B cell (primary cell): ENCODE measurements at regions of chr1 and their contacts with region 1.

Region 1: DNA sequence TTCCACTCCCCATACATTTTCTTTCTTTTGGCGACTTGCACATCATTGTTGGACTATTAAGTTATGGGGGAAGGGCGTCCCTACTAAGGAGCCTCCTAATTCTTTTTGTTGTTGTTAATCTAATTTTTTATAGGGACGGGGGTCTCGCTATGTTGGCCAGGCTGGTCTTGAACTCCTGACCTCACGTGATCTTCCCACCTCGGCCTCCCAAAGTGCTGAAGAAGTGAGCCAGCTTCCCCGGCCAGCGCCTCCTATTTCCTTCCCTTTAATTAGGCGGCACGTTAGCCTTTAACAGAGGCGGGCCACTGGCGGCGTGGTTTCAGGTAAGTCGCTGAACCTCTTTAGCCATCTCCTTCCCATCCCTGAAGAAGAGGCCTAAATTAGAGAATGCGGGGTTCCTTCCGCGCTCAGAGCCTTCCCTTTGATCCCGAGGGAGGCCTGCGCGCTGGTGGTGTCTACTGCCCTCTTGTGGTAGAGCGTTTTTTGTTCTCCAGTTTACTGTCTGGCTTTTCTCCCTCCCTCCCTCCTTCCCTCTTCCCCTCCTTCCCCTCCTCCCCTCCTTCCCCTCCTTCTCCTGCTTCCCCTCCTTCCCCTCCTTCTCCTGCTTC is 38.1 kb downstream of the TNFRSF9 start:
- DNase-seq: peak; percentile 77
- ATAC-seq: peak; percentile 67
- H3K4me3 ChIP-seq: peak overlapping the region in 2 of 5 experiments; percentile 20 to 38
- H3K4me3 Mint-ChIP-seq: peak overlapping the region; percentile 59
- H3K27ac ChIP-seq: no peak overlapping the region
- H3K27ac Mint-ChIP-seq: no peak overlapping the region
- H3K4me1 ChIP-seq: peaks cover 3 to 6% of the 10 kb centered on the region in 2 donors
- H3K4me1 Mint-ChIP-seq: peaks cover 2% of the 10 kb centered on the region
- H3K27me3 ChIP-seq: peaks cover 0 to 9% (median 0%) of the 10 kb centered on the region in 4 experiments
- H3K27me3 Mint-ChIP-seq: no peaks in the 10 kb centered on the region
- CTCF ChIP-seq: peak; percentile 73

Region 2: DNA sequence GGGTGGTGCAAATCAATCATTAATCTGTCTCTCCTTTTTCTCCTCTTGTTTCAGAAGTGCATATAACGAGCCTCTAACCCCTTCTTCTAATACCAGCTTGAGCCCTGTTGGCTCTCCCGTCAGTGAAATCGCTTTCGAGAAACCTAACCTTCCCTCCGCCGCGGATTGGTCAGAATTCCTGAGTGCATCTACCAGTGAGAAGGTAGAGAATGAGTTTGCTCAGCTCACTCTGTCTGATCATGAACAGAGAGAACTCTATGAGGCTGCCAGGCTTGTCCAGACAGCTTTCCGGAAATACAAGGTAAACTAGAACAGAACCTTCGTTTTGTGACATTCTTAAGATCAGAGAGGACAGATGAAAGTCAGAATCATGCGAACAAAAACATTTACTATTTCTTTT is 156.8 kb before region 1 on chr1:
- CTCF ChIA-PET with region 1: no interaction called
- POLR2A ChIA-PET with region 1: no interaction called
- intact Hi-C with region 1: no loop called
- DNase-seq: no peak
- ATAC-seq: no peak
- H3K4me3 ChIP-seq: no peak overlapping the region
- H3K4me3 Mint-ChIP-seq: no peak overlapping the region
- H3K27ac ChIP-seq: no peak overlapping the region
- H3K27ac Mint-ChIP-seq: no peak overlapping the region
- H3K4me1 ChIP-seq: no peaks in the 10 kb centered on the region
- H3K4me1 Mint-ChIP-seq: no peaks in the 10 kb centered on the region
- H3K27me3 ChIP-seq: no peaks in the 10 kb centered on the region
- H3K27me3 Mint-ChIP-seq: no peaks in the 10 kb centered on the region
- CTCF ChIP-seq: no peak

Region 3: DNA sequence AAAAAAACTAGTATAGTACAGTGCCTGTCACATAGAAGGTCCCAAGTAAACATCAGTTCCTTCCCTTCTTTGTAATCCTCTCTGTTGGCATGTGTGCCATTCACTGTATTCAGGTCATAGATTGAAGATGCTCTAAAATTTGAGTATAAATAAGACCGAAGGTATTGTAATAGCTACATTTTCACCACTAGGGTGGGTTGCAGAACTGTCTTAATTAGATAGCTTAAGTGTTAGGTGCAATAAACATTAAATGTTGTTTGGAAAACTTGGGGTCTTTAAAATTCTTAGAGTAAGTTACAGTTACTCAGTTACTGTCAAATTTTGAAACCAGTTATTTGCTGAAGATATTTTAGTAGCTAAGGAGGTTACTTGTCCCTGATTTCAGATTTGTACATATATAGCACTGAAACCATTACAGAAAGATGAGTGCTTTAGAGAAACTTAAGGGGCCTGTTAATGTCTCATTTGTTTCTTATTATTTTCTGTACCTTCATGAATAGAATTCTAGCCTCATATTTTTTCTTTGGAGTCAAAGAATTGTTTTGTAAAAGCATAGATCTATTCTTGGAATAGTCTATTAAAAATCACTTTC is 94.2 kb before region 1 on chr1:
- CTCF ChIA-PET with region 1: interaction called, 12 read pairs
- POLR2A ChIA-PET with region 1: no interaction called
- intact Hi-C with region 1: loop called (anchors 1 kb)
- DNase-seq: peak; percentile 39
- ATAC-seq: no peak
- H3K4me3 ChIP-seq: no peak overlapping the region
- H3K4me3 Mint-ChIP-seq: no peak overlapping the region
- H3K27ac ChIP-seq: no peak overlapping the region
- H3K27ac Mint-ChIP-seq: no peak overlapping the region
- H3K4me1 ChIP-seq: no peaks in the 10 kb centered on the region
- H3K4me1 Mint-ChIP-seq: no peaks in the 10 kb centered on the region
- H3K27me3 ChIP-seq: no peaks in the 10 kb centered on the region
- H3K27me3 Mint-ChIP-seq: peaks cover 4% of the 10 kb centered on the region
- CTCF ChIP-seq: peak; percentile 72